ENCODE measurements at regions of chr1 and their contacts with region 1.

Region 1: GRCh38 chr1:35726450-35727433 is 8.1 kb upstream of the C1orf216 start:
- DNase-seq: peak in 5 of 6 donors; percentile 16 to 61 (median 36)
- ATAC-seq: peak; percentile 84 to 98 (median 96)
- H3K4me3 ChIP-seq: no peak overlapping the region
- H3K27ac ChIP-seq: no peak overlapping the region
- H3K4me1 ChIP-seq: peaks cover 0 to 3% (median 0%) of the 10 kb centered on the region in 3 donors
- H3K27me3 ChIP-seq: no peaks in the 10 kb centered on the region
- CTCF ChIP-seq: peak; percentile 57 to 86 (median 76)

Region 2: DNA sequence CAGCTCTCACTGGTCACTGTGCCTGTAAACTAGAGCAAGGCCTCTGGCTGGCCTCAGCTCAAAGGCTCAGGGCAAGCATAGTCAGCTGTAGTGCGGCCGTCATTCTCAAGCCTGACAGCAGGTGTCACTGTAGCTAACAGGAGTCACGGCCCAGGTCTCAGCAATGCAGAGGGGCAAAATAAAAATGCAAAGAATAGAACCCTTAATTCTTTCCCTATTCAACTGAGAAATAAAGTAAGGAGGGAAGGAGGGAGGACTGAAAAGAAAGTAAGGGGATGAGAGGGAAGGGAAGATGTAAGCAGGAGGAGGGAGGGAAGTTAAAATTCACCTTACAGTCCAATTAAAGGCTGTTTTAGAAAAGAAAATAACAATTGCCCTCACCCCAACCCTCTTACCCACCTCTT is 275.6 kb before region 1 on chr1:
- intact Hi-C with region 1: loop called in 1 of 3 experiments (anchors 10 kb)
- DNase-seq: peak; percentile 74 to 92 (median 86)
- ATAC-seq: peak; percentile 66 to 89 (median 84)
- H3K4me3 ChIP-seq: no peak overlapping the region
- H3K27ac ChIP-seq: no peak overlapping the region
- H3K4me1 ChIP-seq: peaks cover 29 to 61% (median 39%) of the 10 kb centered on the region in 3 donors
- H3K27me3 ChIP-seq: no peaks in the 10 kb centered on the region
- CTCF ChIP-seq: peak; percentile 61 to 76 (median 73)

Region 3: GRCh38 chr1:35577071-35577998 is 149.4 kb before region 1 on chr1:
- intact Hi-C with region 1: loop called in 1 of 3 experiments (anchors 10 kb)
- DNase-seq: no peak
- ATAC-seq: peak in 3 of 4 donors; percentile 25 to 68 (median 55)
- H3K4me3 ChIP-seq: peak overlapping the region in 3 of 4 donors; percentile 13 to 45 (median 22)
- H3K27ac ChIP-seq: no peak overlapping the region
- H3K4me1 ChIP-seq: no peaks in the 10 kb centered on the region
- H3K27me3 ChIP-seq: no peaks in the 10 kb centered on the region
- CTCF ChIP-seq: no peak

Region 4: DNA sequence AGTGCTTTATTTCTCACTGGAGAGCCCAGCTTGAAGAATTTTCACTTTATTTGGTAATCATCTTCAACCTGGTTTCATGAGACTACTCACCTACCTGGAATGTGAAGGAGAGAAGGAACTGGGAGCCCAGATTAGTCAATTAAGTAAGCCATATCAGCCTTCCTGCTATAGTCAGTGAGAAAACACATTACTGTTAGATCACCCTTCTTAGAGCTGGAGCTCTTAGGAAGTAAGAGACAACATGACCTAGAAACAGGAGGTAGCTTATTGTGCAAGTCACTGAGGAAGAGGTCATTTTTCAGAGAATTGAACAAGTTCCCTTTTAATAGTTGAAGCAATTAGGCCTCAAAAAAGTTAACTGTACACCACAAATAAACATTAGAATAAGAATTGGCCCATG is 307.9 kb after region 1 on chr1:
- intact Hi-C with region 1: no loop called
- DNase-seq: no peak
- ATAC-seq: peak in 2 of 4 donors; percentile 63 to 64
- H3K4me3 ChIP-seq: no peak overlapping the region
- H3K27ac ChIP-seq: no peak overlapping the region
- H3K4me1 ChIP-seq: no peaks in the 10 kb centered on the region
- H3K27me3 ChIP-seq: no peaks in the 10 kb centered on the region
- CTCF ChIP-seq: no peak

Measured in pancreas (tissue), 10 donors.